Ascending aorta (tissue), 2 donors: ENCODE measurements at regions of chr18 and their contacts with region 1.

Region 1: DNA sequence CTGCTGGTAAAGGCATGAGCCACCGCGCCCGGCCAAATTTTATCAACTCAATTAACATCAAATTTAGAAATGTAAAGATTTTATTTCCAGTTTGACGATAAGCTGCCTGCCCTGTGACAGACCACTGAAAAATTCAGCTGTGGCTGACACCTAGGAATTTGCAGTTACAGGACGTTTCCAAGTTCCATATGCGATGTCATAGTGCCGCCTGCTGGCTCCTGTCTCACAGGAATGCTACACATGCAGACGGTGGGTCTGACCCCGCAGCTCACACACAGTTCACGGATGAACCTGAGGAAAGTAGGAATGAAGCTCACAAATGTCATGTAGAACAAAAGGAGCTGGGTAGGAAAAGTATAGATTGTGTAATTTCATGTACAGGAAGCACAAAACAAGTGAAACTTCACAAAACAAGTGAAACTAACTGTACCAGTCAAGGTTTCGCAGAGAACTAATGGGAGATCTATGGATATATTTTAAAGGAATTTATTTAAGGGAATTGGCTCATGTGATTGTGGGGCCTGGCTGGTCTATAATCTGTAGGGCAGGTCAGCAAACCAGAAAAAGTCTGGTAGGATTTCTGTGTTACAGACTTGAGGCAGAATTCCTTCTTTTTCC is 13.2 kb upstream of the SEH1L start:
- DNase-seq: peak in 1 of 2 donors; percentile 90
- H3K4me3 ChIP-seq: no peak overlapping the region
- H3K27ac ChIP-seq: no peak overlapping the region
- H3K4me1 ChIP-seq: no peaks in the 10 kb centered on the region
- H3K27me3 ChIP-seq: no peaks in the 10 kb centered on the region
- CTCF ChIP-seq: peak; percentile 88 to 93 (median 90)

Region 2: DNA sequence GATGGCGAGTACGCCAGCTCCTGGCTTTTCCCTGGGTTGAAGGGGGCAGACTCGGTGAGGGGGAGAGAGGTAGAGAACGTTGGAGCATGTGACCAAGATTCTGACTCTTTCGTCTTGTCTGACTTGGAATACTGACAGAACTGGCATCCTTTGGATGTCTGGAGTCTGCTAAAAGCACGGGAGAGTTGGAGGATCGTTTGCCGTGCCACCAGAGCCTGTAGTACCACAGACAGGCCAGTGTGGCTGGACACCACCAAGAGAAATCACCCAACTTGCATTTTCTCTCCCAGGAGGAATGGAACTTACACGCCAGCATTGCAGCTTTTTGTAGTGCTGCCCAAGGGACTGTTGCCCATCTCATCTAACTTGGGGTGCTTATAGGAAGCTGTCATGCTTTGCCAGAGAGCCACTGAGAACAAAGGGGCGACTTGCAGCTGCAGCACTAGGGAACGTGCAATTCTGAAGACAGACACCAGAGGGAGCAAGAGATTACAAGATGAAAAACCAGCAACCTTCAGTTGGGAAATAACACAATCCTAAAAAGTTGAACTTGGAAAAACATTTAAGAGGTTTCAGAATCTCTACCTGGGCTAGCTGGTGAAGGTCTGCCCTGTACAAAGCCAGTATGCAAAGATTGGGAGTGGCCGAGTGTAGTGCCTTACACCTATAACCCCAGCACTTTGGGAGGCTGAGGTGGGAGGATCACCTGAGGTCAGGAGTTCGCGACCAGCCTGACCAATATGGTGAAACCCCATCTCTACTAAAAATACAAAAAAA is 207.6 kb before region 1 on chr18:
- intact Hi-C with region 1: loop called (anchors 1 kb)
- DNase-seq: peak in 1 of 2 donors; percentile 71
- H3K4me3 ChIP-seq: no peak overlapping the region
- H3K27ac ChIP-seq: no peak overlapping the region
- H3K4me1 ChIP-seq: no peaks in the 10 kb centered on the region
- H3K27me3 ChIP-seq: no peaks in the 10 kb centered on the region
- CTCF ChIP-seq: peak; percentile 86 to 96 (median 89)

Region 3: GRCh38 chr18:12744103-12744502 is 190.5 kb before region 1 on chr18:
- intact Hi-C with region 1: loop called (anchors 1 kb)
- DNase-seq: no peak
- H3K4me3 ChIP-seq: no peak overlapping the region
- H3K27ac ChIP-seq: no peak overlapping the region
- H3K4me1 ChIP-seq: no peaks in the 10 kb centered on the region
- H3K27me3 ChIP-seq: no peaks in the 10 kb centered on the region
- CTCF ChIP-seq: peak in 2 of 3 experiments; percentile 37 to 57